Left cardiac atrium (tissue), 4 donors: ENCODE measurements at regions of chr4 and their contacts with region 1.

Region 1: GRCh38 chr4:173735049-173735448 is 205.0 kb upstream of the HAND2 start:
- DNase-seq: no peak
- ATAC-seq: no peak

Region 2: GRCh38 chr4:173652283-173652931 is 82.6 kb before region 1 on chr4:
- intact Hi-C with region 1: no loop called
- DNase-seq: no peak
- ATAC-seq: peak in 1 of 2 donors; percentile 25

Region 3: GRCh38 chr4:173703021-173703420 is 32.0 kb before region 1 on chr4:
- intact Hi-C with region 1: loop called in 1 of 2 experiments (anchors 5 kb)
- DNase-seq: no peak
- ATAC-seq: no peak

Region 4: DNA sequence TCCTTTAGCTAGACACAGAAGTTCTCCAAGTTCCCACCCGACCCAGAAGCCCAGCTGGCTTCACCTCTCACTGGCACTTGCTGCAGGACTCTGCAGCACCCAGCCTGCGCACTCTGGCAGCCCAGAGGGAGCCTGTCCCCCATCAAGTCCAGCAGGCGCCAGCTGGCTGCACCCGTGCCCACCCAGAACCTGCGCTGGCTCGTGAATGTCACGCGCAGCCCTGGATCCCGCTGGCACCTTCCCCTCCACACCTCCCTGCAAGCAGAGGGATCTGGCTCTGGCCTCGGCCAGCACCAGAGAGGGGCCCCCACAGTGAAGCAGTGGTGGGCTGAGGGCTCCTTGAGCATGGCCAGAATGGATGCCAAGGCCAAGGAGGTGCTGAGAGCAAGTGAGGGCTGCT is 17.5 kb before region 1 on chr4:
- intact Hi-C with region 1: no loop called
- DNase-seq: no peak
- ATAC-seq: no peak

Region 5: DNA sequence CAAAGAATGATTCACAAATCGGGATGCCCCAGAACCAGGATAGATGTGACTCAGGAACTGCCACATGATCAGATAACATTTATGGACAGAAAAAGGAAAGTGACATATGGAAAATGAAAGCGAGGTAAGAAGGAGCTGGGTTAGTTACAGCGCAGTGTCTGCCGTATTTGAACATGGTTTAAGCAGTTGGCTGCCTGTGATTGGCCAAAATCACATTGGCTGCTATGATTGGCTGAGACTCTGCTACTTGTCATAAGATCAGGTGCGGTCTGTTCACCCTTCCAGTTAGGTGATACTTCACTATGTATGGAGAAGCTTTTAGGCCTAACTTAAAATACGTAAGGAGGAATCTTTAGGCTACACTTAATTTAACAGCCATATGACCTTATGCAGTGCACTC is 117.7 kb after region 1 on chr4:
- intact Hi-C with region 1: no loop called
- DNase-seq: no peak
- ATAC-seq: no peak